Mammary epithelial cell (primary cell): ENCODE measurements at regions of chr16 and their contacts with region 1.

Region 1: GRCh38 chr16:10428433-10429168 is 42.7 kb downstream of the ATF7IP2 start:
- DNase-seq: peak; percentile 59
- H3K4me3 ChIP-seq: no peak overlapping the region
- H3K27ac ChIP-seq: peak overlapping the region; percentile 82
- H3K4me1 ChIP-seq: peaks cover 13% of the 10 kb centered on the region
- H3K27me3 ChIP-seq: no peaks in the 10 kb centered on the region
- CTCF ChIP-seq: no peak

Region 2: DNA sequence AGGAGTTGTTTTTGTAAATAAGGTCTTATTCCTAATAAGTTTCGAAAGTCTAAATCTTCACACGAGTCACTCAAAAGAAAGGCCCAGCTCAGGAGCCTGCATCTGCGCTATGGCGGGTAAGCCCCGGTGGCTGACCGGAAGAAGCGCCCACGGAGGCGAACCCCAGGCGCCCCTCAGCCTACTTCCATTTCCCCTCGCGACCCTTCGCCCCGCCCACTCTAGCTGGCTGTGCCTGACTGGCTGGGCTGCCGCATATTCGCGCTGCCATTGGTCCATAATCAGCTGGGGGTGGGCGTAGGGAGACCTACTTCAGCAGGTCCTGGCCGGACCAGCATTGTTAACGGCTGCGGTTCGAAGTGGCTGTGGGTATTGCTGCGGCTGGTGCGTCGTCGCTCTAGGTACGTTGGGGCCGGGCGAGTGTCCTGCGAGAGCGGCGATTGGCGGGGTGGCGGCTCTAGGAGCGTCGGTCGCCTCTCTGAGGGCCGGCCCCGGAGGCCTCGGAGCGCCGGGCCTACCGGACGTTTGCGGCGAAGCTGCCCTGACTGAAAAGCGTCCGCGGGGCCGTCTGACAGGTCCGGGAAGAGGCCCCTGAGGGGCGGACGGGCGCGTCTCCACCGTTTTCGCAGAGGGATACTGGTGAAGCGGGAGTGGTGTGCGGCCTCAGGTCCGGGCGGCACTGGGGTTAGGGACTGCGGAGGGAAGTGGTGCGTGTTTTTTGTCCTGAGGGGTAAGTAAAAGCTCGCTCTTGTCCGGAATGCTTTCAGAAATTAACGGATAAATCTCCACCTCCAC is 42.7 kb before region 1 on chr16 and contains the start of gene ATF7IP2:
- CTCF ChIA-PET with region 1: no interaction called
- dilution Hi-C with region 1: no loop called
- in situ Hi-C with region 1: no loop called
- intact Hi-C with region 1: loop called (anchors 1 kb)
- DNase-seq: peak; percentile 81
- H3K4me3 ChIP-seq: peak within 1 kb of the TSS; percentile 63 to 85 (median 67)
- H3K27ac ChIP-seq: peak within 1 kb of the TSS; percentile 31
- H3K4me1 ChIP-seq: no peaks in the 10 kb centered on the region
- H3K27me3 ChIP-seq: peaks cover 5% of the 10 kb centered on the region
- CTCF ChIP-seq: no peak
- total RNA-seq, gene ATF7IP2: 6.8 to 10.0 TPM